Posterior cingulate gyrus (tissue), 11 donors: ENCODE measurements at regions of chr12 and their contacts with region 1.

Region 1: DNA sequence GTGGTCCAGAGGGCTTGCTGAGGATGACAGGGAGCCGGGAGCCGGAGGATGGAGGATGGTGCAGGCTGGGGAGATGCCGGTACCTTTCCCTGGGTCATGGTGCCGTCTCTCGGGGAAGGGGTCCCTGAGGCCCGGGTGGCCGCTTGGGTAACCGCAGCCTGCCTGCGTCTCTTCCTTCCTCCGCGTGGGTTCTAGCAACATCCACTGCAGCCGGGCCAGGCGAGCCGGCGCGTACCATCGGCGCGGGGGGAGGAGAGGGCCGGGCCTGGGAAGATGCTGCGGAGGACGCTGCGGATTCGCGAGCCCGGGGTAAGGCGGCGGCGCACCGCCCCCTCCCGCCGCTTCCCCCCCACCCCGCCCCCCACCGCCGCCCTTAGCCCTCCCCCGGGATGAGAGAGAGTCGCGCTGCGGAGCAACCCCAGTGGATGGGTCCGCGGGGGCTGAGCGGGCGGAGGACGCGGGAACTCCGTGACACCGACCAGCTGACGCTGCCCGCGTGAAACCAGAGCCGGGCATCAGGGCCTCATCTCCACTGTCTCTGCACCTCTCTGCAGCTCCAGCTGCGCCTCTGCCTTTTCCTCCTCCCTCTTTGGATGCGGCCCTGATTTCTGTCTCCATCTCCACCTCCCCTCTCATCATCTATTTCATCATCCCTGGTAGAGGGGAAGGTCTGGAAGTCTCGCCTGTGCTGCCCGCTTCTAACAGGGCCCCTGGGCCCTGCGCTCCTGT is at the start of gene FAIM2:
- DNase-seq: peak; percentile 86 to 99 (median 91)

Region 2: GRCh38 chr12:49874142-49874897 is 29.5 kb before region 1 on chr12:
- intact Hi-C with region 1: loop called (anchors 2 kb)
- DNase-seq: peak in 5 of 10 donors; percentile 49 to 90 (median 76)

Region 3: DNA sequence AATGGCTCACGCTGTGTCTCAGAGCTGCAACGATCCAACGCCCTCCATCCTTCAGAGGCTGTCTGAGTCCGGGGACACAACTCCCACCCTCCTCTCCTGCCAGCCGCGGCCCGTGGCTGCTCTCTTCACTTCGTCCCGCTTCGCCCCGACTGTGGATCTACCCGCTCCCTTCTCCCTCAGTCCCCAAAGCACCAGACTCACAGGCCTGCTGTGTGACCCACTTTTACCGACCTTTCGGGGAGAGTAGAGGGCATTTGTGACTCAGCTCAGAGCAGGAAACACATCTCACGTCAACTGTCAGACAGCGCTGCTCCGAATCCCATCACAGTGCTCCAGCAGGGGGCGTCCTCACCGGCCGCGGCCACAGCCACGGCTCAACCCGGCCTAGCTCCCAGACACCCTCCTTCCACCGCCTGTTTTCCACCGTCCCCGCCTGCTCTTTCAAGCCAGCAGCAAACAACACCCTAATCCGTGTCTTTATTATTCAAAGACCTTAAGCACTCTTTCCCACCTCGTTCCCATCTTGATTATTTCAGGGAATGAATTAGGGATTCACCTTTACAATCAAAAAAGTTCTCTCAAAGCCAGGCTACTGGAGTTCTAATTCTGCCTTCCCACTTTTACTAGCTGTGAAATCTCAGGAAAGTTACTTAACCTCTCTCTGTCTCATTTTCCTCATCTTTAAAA is 41.7 kb after region 1 on chr12:
- intact Hi-C with region 1: loop called (anchors 5 kb)
- DNase-seq: peak; percentile 58 to 96 (median 84)

Region 4: DNA sequence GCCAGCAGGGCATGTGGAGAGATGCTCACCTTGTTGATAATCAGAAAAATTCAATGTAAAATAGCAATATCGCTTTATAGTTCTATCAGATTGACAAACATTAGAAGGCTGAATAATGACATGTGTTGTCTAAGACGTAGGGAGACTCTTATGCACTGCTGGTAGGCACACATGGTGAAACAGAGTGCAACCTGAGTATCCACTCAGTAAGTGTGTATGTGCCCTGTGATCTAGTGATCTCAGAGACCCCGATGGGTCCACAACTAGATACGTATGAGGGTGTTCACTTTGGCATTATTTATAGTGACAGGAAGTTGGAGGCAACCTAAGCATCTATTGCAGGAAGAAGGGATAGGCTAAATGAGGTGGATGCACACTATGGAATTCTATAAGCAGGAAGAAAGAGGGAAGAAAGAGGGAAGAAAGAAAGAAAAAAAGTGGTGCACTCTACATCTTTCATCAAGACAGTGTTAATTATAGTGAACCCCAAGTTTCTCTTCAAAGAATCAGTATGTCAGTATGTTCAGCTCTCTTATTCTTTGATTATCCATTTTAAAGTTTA is 1980.3 kb after region 1 on chr12:
- intact Hi-C with region 1: no loop called
- DNase-seq: peak in 1 of 10 donors; percentile 8